BJ (cell line): ENCODE measurements at regions of chr19 and their contacts with region 1.

Region 1: GRCh38 chr19:33771384-33772101 is 25.1 kb upstream of the KCTD15 start:
- DNase-seq: no peak
- H3K4me3 ChIP-seq: no peak overlapping the region
- H3K27me3 ChIP-seq: peaks cover 5% of the 10 kb centered on the region
- CTCF ChIP-seq: peak; percentile 83

Region 2: DNA sequence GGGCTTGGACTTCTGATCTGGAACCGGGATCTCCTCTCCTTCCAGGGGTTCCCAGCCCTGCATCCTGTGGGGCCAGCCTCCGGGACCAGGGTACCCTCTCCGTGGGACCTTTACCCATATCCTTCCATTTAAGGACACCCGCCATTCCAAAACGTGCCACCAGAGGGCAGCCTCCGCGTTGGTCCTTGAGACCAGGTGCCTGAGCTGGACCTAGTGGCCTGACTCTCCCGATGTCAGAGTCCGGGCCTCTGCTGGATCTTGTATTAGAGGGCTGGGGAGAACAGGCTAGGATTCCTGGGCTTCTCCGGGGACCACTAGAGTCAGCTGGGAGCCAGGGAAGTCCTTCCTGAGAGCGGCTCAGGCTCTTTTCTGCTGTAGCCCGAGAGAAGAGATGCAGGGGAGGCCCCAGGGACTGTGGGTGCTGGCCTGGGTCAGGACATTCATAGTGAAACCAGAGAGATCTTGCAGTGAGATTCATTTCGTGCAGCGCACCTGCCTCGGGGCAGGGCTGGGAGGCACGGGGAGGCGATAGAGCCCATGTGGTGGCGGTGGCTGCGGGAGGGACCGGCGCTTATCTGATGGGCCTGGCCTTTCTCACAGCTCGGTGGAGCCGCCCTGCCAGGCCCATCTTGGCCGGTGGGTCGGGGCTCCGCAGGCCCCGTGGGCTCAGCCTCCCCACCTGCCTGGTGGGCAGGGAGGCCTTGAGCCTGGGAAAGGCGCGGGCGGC is 536.1 kb before region 1 on chr19:
- CTCF ChIA-PET with region 1: interaction called, 14 read pairs
- POLR2A ChIA-PET with region 1: no interaction called
- DNase-seq: no peak
- H3K4me3 ChIP-seq: no peak overlapping the region
- H3K27me3 ChIP-seq: peaks cover 6% of the 10 kb centered on the region; the same call in 1 of the 2 replicates
- CTCF ChIP-seq: peak; percentile 92

Region 3: GRCh38 chr19:33406521-33407139 is 364.9 kb before region 1 on chr19:
- CTCF ChIA-PET with region 1: interaction called, 17 read pairs
- POLR2A ChIA-PET with region 1: no interaction called
- DNase-seq: no peak
- H3K4me3 ChIP-seq: no peak overlapping the region
- H3K27me3 ChIP-seq: no peaks in the 10 kb centered on the region
- CTCF ChIP-seq: peak; percentile 96

Region 4: DNA sequence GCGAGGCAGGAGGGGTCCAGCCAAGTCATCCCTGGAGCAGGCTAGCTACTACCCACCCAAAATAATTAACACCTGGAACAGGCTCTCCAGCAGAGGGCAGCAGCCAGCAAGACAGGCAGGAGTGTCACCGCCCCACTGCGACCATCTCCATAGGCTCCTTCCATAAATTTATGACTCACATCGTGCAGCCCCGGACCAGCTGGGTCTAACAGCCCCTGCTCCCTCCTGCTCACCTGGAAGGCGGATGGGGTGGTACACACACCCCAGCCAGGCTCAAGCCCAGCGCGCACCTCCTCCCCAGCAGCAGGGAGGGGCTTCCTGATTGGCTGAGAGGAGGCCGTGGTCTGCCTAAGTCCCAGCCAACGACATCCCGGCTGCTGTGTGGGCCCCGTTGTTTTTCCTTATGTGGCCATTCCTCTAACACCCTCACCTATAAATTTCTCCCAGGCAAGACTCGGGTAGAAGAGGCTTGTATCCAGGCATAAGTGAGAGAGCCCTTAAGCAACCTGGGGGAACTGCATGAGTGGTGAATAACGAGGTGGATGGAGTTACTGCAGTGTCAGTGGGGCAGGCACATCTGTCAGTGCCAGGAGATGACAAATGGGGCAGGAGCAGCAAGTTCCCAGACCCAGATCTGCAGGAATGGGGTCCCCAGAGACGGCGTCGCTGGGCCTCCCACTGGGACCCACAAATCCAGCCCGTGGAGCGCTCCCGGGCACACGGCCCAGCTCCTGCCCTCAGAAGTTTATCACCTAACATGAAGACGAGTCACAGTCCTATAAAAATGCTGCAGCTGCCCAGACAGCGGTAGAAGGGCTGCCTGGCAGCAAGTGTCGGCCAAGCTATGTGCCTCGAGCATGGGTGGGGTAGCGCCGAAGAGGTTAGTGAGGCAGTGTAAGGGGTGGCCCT is 355.0 kb before region 1 on chr19:
- CTCF ChIA-PET with region 1: interaction called, 120 read pairs
- POLR2A ChIA-PET with region 1: no interaction called
- DNase-seq: no peak
- H3K4me3 ChIP-seq: no peak overlapping the region
- H3K27me3 ChIP-seq: no peaks in the 10 kb centered on the region
- CTCF ChIP-seq: peak; percentile 76

Region 5: DNA sequence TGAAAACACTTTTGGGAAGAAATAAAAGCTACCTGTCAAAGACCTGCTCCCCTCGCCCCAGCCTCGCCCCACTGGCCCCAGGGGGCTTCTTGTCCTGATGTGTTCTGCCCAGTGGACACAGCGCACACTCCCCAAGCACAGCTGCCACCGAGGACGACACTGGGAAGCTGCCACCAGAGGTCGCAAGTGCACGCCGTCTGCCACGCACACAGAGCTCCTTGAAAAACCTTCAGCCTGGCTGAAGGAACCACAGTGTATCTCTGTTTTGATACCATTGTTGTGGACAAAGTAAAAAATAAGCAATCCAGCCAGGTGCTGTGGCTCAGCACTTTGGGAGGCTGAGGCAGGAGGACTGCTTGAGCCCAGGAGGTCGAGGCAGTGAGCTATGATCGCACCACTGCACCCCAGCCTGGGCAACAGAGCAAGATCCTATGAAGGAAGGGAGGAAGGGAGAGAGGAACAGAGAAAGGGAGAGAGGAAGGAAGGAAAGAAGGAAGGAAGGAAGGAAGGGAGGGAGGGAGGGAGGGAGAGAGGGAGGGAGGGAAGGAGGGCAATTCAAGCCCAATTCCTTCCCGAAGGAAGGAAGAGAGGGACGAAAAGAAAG is 340.8 kb before region 1 on chr19:
- CTCF ChIA-PET with region 1: interaction called, 125 read pairs
- POLR2A ChIA-PET with region 1: no interaction called
- DNase-seq: no peak
- H3K4me3 ChIP-seq: no peak overlapping the region
- H3K27me3 ChIP-seq: no peaks in the 10 kb centered on the region
- CTCF ChIP-seq: peak; percentile 92

Region 6: DNA sequence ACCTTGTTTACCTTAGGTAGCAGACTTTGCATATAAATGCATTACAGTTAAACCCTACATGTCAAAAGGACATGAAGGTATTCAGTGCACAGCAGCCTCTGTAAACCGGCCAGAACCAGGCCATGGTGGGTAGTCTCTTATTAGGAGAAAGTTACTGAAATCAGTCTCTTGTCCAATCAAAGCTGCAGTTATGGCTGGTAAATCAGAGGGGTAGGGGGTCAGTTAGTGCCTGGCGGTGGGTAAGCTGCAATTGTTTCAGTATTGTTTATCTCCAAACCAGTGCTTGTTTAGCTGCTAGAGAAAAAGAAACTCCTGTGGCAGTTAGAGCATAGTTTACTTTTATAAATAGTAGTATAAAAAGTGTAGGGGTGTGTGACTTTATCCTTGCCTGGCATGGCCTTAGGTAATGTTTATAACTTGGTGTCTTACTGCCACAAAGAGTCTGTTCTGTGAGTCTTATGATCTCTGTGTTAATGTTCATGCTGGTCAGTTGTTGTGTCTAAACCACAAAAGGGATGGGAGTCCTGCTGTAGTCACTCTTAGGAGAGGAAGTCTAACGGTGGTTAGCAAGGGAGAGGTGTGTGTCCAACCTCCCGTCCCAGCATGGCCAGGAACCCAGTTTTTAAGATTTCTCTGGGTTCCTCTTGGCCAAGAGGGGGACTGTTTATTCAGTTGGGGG is 121.8 kb before region 1 on chr19:
- CTCF ChIA-PET with region 1: no interaction called
- POLR2A ChIA-PET with region 1: no interaction called
- DNase-seq: no peak
- H3K4me3 ChIP-seq: no peak overlapping the region
- H3K27me3 ChIP-seq: no peaks in the 10 kb centered on the region; the same call in 1 of the 2 replicates
- CTCF ChIP-seq: no peak

Region 7: DNA sequence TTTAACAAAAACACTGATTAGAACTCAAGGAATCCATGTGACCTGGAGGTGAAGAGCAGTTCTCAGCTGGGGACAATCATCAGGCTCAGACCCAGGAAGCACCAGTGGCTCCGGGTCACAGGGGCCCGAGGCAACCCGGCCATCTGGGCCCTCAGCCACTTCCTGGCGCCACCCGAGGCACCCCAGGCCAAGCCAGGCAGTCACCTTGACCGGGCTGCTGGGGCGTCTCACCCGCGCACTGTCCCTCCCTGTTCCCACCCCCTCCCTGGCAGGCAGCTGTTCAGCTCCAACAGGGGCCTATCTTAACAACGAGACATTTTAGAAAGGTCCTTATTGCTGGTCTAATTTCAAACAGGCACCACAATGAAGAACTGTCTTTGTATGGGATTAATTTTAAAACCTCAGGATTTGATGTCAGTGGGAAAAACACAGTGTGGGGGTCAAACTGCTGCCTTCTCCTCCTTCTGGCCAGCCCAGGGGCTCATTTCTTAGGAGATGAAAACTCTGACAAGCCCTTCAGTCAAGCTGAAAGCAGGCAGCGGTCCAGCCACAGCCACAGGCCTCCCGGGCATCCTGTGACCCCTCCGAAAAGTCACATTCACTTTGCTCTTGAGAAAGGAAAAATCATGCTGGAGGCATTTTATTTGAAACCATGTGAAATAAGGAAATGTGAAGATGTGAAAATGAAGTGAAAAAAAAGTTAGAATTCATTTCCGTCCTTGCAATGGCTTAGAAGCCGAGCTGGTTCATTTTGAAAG is 108.5 kb after region 1 on chr19:
- CTCF ChIA-PET with region 1: no interaction called
- POLR2A ChIA-PET with region 1: no interaction called
- DNase-seq: no peak
- H3K4me3 ChIP-seq: no peak overlapping the region
- H3K27me3 ChIP-seq: no peaks in the 10 kb centered on the region
- CTCF ChIP-seq: no peak

Region 8: DNA sequence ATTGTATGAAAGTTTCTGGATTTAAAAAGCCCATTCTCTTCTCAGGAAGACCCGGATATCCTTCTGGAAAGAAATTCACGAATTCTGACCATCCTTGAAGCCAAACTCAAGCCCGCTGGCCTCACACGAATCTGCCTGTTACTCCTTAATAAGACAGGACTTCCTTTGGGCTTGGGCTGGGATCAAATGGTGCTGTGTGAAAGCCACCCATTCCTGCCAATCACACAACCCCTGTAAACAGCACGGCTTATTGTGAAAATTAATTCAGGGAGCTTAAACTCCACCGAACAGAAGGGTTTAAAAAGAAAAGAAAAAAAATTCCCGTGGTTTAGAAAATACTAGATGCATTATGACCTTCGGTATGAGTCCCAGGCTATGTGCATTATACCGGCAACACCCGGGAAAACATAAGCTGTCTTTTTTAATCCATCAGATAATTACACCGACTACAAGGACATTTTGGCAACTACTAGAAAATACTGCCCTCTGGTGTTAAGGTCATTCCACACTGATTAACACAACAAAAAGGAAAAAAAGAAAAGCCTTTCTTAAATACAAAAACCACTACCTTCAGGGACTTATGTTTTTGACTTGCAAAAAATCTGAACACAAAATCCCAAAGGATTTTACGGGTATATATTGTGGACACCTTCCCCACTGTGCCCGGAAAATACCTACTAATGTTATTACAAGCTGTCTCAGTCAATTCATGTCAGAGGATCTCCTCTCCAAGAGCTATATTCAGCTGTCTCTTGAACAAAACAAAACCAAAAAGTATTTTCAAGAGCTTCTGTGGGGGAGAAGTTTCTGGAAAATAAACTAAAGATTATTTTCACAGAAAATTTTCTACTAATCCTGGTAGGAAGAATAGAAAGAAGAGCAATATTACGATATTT is 324.7 kb after region 1 on chr19:
- CTCF ChIA-PET with region 1: interaction called, 10 read pairs
- POLR2A ChIA-PET with region 1: no interaction called
- DNase-seq: no peak
- H3K4me3 ChIP-seq: no peak overlapping the region
- H3K27me3 ChIP-seq: no peaks in the 10 kb centered on the region
- CTCF ChIP-seq: peak; percentile 54